Caco-2 (cell line): ENCODE measurements at regions of chr2 and their contacts with region 1.

Region 1: DNA sequence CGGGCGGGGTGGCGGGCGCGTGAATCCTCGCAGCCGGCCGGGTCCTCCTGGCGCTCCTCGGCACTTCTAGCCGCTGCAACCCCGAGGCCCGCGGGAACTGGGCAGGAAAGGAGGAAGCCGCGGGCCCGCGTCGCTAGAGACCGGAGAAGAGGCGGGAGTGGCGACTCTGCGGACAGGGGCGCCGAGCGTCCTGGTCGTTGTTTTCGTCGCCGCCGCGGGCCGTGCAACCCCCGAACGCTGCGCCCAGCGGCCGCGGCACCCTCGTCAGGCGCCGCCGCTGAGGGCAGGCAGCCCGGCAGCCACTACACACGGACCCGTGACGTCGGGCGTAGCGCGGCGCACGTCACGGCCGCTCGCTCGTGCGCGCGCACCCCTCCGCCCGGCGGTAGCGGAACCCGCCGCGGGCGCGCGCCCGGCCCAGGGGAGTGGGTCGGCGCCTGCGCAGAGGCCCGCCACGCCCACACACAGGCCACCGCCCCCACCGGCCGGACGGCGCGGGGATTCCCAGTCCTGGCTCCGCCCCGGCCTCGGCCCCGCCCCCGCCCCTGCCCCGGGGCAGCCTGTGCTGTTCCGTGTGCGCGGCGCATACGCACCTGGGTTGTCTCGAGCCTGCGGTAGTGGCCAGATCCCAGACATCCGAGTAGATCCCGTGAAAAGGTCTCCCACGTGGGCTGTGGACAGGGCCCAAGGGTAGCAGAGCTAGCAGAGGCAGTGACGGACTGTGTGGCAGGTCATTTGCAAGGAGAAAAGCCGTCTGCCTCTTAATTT is at the start of gene MAP3K2:
- DNase-seq: peak; percentile 92 to 97
- H3K4me3 ChIP-seq: peak within 1 kb of the TSS; percentile 99
- H3K4me3 Mint-ChIP-seq: peak within 1 kb of the TSS; percentile 82
- H3K27ac Mint-ChIP-seq: peak within 1 kb of the TSS; percentile 53
- H3K4me1 ChIP-seq: peaks cover 22% of the 10 kb centered on the region
- H3K4me1 Mint-ChIP-seq: peaks cover 41% of the 10 kb centered on the region
- H3K27me3 ChIP-seq: no peaks in the 10 kb centered on the region
- H3K27me3 Mint-ChIP-seq: no peaks in the 10 kb centered on the region
- CTCF ChIP-seq: no peak
- total RNA-seq, gene MAP3K2: 35.0 and 38.7 TPM in 2 replicates

Region 2: GRCh38 chr2:127324635-127325034 is 63.2 kb before region 1 on chr2:
- CTCF ChIA-PET with region 1: no interaction called
- POLR2A ChIA-PET with region 1: no interaction called
- intact Hi-C with region 1: loop called (anchors 5 kb)
- DNase-seq: peak in 1 of 2 experiments; percentile 48
- H3K4me3 ChIP-seq: no peak overlapping the region
- H3K4me3 Mint-ChIP-seq: no peak overlapping the region
- H3K27ac Mint-ChIP-seq: no peak overlapping the region
- H3K4me1 ChIP-seq: no peaks in the 10 kb centered on the region
- H3K4me1 Mint-ChIP-seq: no peaks in the 10 kb centered on the region
- H3K27me3 ChIP-seq: no peaks in the 10 kb centered on the region
- H3K27me3 Mint-ChIP-seq: no peaks in the 10 kb centered on the region
- CTCF ChIP-seq: peak; percentile 67 to 79

Region 3: DNA sequence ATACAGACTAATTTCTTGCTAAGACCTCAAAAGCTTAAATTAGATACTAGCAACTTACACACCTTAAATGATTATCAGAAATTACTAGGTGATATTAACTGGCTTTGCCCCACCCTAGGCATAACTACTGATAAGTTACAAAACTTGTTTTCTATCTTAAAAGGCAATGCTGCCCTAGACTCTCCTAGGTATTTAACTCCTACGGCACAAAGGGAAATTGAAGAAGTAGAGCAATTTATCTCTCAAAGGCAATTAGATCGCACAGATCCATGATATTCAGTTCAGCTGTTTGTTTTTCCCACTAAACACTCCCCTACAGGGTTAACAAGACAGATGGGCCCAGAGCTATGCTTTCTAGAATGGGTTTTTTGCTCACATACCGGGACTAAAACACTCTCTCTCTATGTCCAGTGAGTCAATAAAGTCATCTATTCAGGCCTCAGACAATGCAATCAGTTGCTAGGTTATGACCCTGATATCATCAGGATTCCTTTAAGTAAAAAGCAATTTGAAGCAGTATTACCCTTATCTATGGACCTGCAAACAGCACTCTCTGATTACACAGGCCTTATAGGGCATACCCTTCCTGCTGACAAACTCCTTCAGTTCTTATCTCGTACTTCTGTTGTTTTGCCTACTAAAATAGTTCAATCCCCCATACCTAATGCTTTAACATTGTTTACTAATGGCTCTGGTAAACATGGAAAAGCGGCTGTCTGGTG is 14.3 kb before region 1 on chr2:
- CTCF ChIA-PET with region 1: no interaction called
- POLR2A ChIA-PET with region 1: no interaction called
- intact Hi-C with region 1: loop called (anchors 2 kb)
- DNase-seq: peak; percentile 36 to 50
- H3K4me3 ChIP-seq: no peak overlapping the region
- H3K4me3 Mint-ChIP-seq: no peak overlapping the region
- H3K27ac Mint-ChIP-seq: no peak overlapping the region
- H3K4me1 ChIP-seq: peaks cover 6% of the 10 kb centered on the region
- H3K4me1 Mint-ChIP-seq: peaks cover 16% of the 10 kb centered on the region
- H3K27me3 ChIP-seq: no peaks in the 10 kb centered on the region
- H3K27me3 Mint-ChIP-seq: no peaks in the 10 kb centered on the region
- CTCF ChIP-seq: no peak

Region 4: DNA sequence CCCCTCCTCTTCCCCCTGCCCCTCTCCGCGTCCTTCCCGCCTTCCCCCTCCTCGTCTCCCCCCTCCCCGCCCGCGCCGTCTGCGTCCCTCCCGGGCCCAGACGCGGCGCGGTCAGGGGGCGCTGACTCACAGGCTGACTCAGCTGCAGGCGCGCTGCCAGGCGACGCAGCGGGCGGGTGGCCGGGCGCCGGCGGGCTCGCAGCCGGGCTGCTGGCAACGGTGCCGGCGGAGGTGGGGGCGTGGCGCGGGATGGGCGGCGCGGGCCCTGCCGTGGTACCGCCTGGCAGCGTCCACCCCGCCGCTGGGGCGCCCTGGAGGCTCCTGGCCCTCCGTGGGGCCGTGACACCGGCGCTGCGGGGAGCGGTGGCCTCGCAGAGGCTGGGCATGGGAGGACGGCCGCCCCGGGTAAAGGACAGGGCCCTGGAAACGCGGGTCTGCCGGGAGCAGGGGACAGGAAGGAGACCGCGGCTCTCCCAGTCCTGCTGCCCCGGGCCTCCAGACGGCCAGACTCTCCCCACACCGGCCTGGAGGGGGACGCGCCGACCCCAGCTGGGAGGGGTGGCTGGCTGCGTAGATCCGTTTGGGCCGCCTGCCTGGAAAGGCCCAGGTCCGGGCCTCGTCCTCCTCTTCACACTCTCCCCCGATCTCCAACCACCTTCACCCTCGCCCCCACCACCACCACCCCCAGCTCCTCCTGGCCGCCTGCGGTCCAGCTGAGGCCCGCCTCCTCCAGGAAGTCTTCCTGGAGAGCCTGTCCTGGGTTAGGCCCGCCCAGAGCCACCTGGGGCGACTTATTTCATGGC is 20.4 kb after region 1 on chr2:
- CTCF ChIA-PET with region 1: interaction called, 6 read pairs
- POLR2A ChIA-PET with region 1: interaction called, 9 read pairs
- intact Hi-C with region 1: loop called (anchors 1 kb)
- DNase-seq: peak; percentile 85 to 91
- H3K4me3 ChIP-seq: peak overlapping the region; percentile 75
- H3K4me3 Mint-ChIP-seq: peak overlapping the region; percentile 83
- H3K27ac Mint-ChIP-seq: peak overlapping the region; percentile 57
- H3K4me1 ChIP-seq: peaks cover 30% of the 10 kb centered on the region
- H3K4me1 Mint-ChIP-seq: peaks cover 31% of the 10 kb centered on the region
- H3K27me3 ChIP-seq: no peaks in the 10 kb centered on the region
- H3K27me3 Mint-ChIP-seq: no peaks in the 10 kb centered on the region
- CTCF ChIP-seq: no peak

Region 5: GRCh38 chr2:127422810-127423475 is 35.1 kb after region 1 on chr2:
- CTCF ChIA-PET with region 1: interaction called, 3 read pairs
- POLR2A ChIA-PET with region 1: no interaction called
- intact Hi-C with region 1: loop called (anchors 5 kb)
- DNase-seq: peak in 1 of 2 experiments; percentile 34
- H3K4me3 ChIP-seq: peak overlapping the region; percentile 50
- H3K4me3 Mint-ChIP-seq: peak overlapping the region; percentile 71
- H3K27ac Mint-ChIP-seq: no peak overlapping the region
- H3K4me1 ChIP-seq: peaks cover 7% of the 10 kb centered on the region; the same call in 1 of the 2 replicates
- H3K4me1 Mint-ChIP-seq: peaks cover 7% of the 10 kb centered on the region
- H3K27me3 ChIP-seq: no peaks in the 10 kb centered on the region
- H3K27me3 Mint-ChIP-seq: no peaks in the 10 kb centered on the region
- CTCF ChIP-seq: no peak

Region 6: DNA sequence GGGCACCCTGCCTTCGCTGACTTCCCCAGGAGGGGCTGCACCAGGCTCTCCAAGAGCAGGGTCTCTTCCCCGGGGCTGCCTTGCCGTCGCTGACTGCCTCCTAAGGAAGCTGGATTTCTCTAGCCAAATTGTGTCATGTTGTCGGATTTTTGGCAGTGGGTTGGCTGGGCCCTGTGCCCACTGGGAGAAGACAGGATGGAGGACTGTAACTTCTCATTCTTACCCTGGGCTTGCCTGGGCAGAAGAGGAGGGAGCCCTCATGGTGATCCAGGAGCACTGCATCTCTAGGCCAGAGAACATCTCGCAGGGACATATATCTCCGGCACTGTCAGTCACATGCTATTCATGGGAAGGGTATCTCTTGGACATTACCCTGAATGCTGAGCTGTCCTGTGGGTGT is 154.0 kb after region 1 on chr2:
- CTCF ChIA-PET with region 1: no interaction called
- POLR2A ChIA-PET with region 1: no interaction called
- intact Hi-C with region 1: loop called (anchors 5 kb)
- DNase-seq: no peak
- H3K4me3 ChIP-seq: no peak overlapping the region
- H3K4me3 Mint-ChIP-seq: no peak overlapping the region
- H3K27ac Mint-ChIP-seq: peak overlapping the region; percentile 49
- H3K4me1 ChIP-seq: peaks cover 28% of the 10 kb centered on the region
- H3K4me1 Mint-ChIP-seq: peaks cover 15% of the 10 kb centered on the region
- H3K27me3 ChIP-seq: no peaks in the 10 kb centered on the region
- H3K27me3 Mint-ChIP-seq: peaks cover 1% of the 10 kb centered on the region
- CTCF ChIP-seq: no peak